HepG2 (cell line): ENCODE measurements at regions of chr17 and their contacts with region 1.

Region 1: GRCh38 chr17:66228887-66229782 is at the start of gene APOH:
- DNase-seq: peak; percentile 99
- ATAC-seq: peak; percentile 87
- H3K4me3 ChIP-seq: peak within 1 kb of the TSS; percentile 55 to 77 (median 70)
- H3K27ac ChIP-seq: peak within 1 kb of the TSS; percentile 89
- H3K4me1 ChIP-seq: peaks cover 70% of the 10 kb centered on the region
- H3K27me3 ChIP-seq: no peaks in the 10 kb centered on the region; a peak in 1 of 5 replicates
- CTCF ChIP-seq: no peak
- EP300 ChIP-seq: peak in 1 of 2 experiments; percentile 93; a peak in 3 of 4 replicates
- POLR2A ChIP-seq: peak; percentile 83 to 89
- RAD21 ChIP-seq: 0 out of 2 replicates have a peak, but pooled peaks have one; percentile 18
- total RNA-seq, gene APOH: 2,482 and 4,846 TPM in 2 replicates

Region 2: GRCh38 chr17:66098040-66098439 is 131.1 kb before region 1 on chr17:
- CTCF ChIA-PET with region 1: no interaction called
- POLR2A ChIA-PET with region 1: no interaction called
- in situ Hi-C with region 1: no loop called
- intact Hi-C with region 1: no loop called
- DNase-seq: no peak
- ATAC-seq: no peak
- H3K4me3 ChIP-seq: no peak overlapping the region
- H3K27ac ChIP-seq: no peak overlapping the region
- H3K4me1 ChIP-seq: no peaks in the 10 kb centered on the region
- H3K27me3 ChIP-seq: no peaks in the 10 kb centered on the region
- CTCF ChIP-seq: no peak
- EP300 ChIP-seq: no peak
- POLR2A ChIP-seq: no peak
- RAD21 ChIP-seq: no peak

Region 3: GRCh38 chr17:66301797-66302741 is 72.9 kb after region 1 on chr17 and contains the start of gene PRKCA:
- CTCF ChIA-PET with region 1: no interaction called
- POLR2A ChIA-PET with region 1: no interaction called
- in situ Hi-C with region 1: no loop called
- intact Hi-C with region 1: loop called (anchors 5 kb)
- DNase-seq: peak; percentile 54
- ATAC-seq: peak; percentile 60
- H3K4me3 ChIP-seq: peak within 1 kb of the TSS; percentile 88 to 95 (median 91)
- H3K27ac ChIP-seq: peak within 1 kb of the TSS; percentile 61
- H3K4me1 ChIP-seq: peaks cover 32% of the 10 kb centered on the region
- H3K27me3 ChIP-seq: no peaks in the 10 kb centered on the region
- CTCF ChIP-seq: no peak
- EP300 ChIP-seq: no peak
- POLR2A ChIP-seq: peak; percentile 91 to 97
- RAD21 ChIP-seq: no peak; the same call in 1 of the 2 replicates
- total RNA-seq, gene PRKCA: 18.5 and 24.4 TPM in 2 replicates

Region 4: GRCh38 chr17:66348584-66349165 is 119.5 kb after region 1 on chr17:
- CTCF ChIA-PET with region 1: no interaction called
- POLR2A ChIA-PET with region 1: no interaction called
- in situ Hi-C with region 1: no loop called
- intact Hi-C with region 1: loop called (anchors 10 kb)
- DNase-seq: peak; percentile 68
- ATAC-seq: peak; percentile 77
- H3K4me3 ChIP-seq: no peak overlapping the region
- H3K27ac ChIP-seq: peak overlapping the region; percentile 27
- H3K4me1 ChIP-seq: peaks cover 79% of the 10 kb centered on the region
- H3K27me3 ChIP-seq: no peaks in the 10 kb centered on the region
- CTCF ChIP-seq: no peak
- EP300 ChIP-seq: peak in 1 of 2 experiments; percentile 32; a peak in 2 of 4 replicates
- POLR2A ChIP-seq: no peak
- RAD21 ChIP-seq: no peak

Region 5: DNA sequence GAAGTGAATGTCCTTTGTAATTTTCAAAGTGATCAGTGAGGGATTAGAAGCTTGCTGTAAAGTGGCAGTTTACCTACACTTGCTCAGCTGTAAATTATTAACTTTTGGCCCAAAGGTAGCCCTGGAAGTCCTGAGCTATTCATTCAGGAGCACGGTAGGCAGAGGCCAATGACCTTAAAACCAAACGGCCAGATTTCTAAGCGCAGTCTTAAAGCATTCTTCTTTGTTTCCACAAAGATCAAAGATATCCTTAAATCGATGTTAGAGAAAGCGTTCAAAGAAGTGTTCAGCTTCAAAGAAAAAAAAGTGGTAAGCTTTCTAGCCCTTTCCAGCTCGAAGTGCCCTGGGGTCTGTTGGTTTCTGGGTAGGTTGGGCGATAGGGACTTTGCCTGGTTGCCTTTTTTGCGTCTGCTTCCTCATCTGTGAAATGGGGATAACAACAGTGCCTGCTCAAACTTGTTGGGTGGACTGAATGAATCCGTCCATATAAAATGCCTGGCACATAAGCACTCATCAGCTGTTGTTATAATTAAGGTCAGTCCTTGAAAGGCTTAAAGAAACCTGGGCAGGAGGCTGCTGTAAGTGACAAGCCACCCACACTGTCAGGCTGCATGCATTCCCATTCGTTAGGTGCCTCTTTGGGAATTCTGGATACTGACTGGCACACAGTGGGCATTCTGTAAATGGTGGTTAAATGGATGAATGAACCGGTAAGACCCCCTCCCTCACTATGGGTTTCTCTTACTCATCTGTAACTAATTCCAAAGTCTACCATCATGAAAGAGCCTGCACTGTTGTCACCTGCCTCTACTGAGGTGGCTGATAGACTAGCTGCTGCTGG is 186.5 kb after region 1 on chr17:
- CTCF ChIA-PET with region 1: no interaction called
- POLR2A ChIA-PET with region 1: interaction called, 6 read pairs
- in situ Hi-C with region 1: no loop called
- intact Hi-C with region 1: loop called (anchors 5 kb)
- DNase-seq: peak; percentile 99
- ATAC-seq: peak; percentile 90
- H3K4me3 ChIP-seq: peak overlapping the region in 1 of 3 experiments; percentile 14; a peak in 2 of 6 replicates
- H3K27ac ChIP-seq: peak overlapping the region; percentile 83
- H3K4me1 ChIP-seq: peaks cover 85% of the 10 kb centered on the region
- H3K27me3 ChIP-seq: no peaks in the 10 kb centered on the region
- CTCF ChIP-seq: no peak
- EP300 ChIP-seq: peak in 1 of 2 experiments; percentile 99; a peak in 2 of 4 replicates
- POLR2A ChIP-seq: peak in 1 of 2 experiments; percentile 14; a peak in 1 of 4 replicates
- RAD21 ChIP-seq: no peak; the same call in 1 of the 2 replicates